Naive thymus-derived CD4-positive, alpha-beta T cell (primary cell): ENCODE measurements at regions of chr16 and their contacts with region 1.

Region 1: GRCh38 chr16:69396187-69397061 is 10.6 kb upstream of the TERF2 start:
- DNase-seq: peak; percentile 23 to 73 (median 66)
- ATAC-seq: peak; percentile 86
- H3K4me3 ChIP-seq: no peak overlapping the region
- H3K4me3 Mint-ChIP-seq: peak overlapping the region in 3 of 10 donors; percentile 26 to 57 (median 50)
- H3K27ac ChIP-seq: peak overlapping the region; percentile 22
- H3K27ac Mint-ChIP-seq: peak overlapping the region; percentile 8 to 76 (median 41)
- H3K4me1 ChIP-seq: peaks cover 0 to 3% of the 10 kb centered on the region in 2 donors
- H3K4me1 Mint-ChIP-seq: peaks cover 0 to 17% (median 5%) of the 10 kb centered on the region in 7 donors
- H3K27me3 ChIP-seq: no peaks in the 10 kb centered on the region
- H3K27me3 Mint-ChIP-seq: peaks cover 0 to 11% (median 0%) of the 10 kb centered on the region in 5 donors

Region 2: GRCh38 chr16:69371564-69371963 is 24.9 kb before region 1 on chr16:
- CTCF ChIA-PET with region 1: no interaction called
- POLR2A ChIA-PET with region 1: no interaction called
- intact Hi-C with region 1: no loop called
- DNase-seq: no peak
- ATAC-seq: no peak
- H3K4me3 ChIP-seq: no peak overlapping the region
- H3K4me3 Mint-ChIP-seq: peak overlapping the region in 1 of 10 donors; percentile 59
- H3K27ac ChIP-seq: no peak overlapping the region
- H3K27ac Mint-ChIP-seq: peak overlapping the region in 2 of 9 donors; percentile 16 to 58
- H3K4me1 ChIP-seq: no peaks in the 10 kb centered on the region
- H3K4me1 Mint-ChIP-seq: peaks cover 3 to 23% (median 15%) of the 10 kb centered on the region in 7 donors
- H3K27me3 ChIP-seq: no peaks in the 10 kb centered on the region
- H3K27me3 Mint-ChIP-seq: no peaks in the 10 kb centered on the region

Region 3: GRCh38 chr16:69443927-69444631 is 47.7 kb after region 1 on chr16:
- CTCF ChIA-PET with region 1: interaction called, 4 read pairs
- POLR2A ChIA-PET with region 1: interaction called, 3 read pairs
- intact Hi-C with region 1: loop called in 1 of 2 experiments (anchors 5 kb)
- DNase-seq: peak in 7 of 9 donors; percentile 1 to 51 (median 35)
- ATAC-seq: peak; percentile 85
- H3K4me3 ChIP-seq: peak overlapping the region; percentile 45
- H3K4me3 Mint-ChIP-seq: peak overlapping the region; percentile 68 to 90 (median 86)
- H3K27ac ChIP-seq: peak overlapping the region; percentile 64
- H3K27ac Mint-ChIP-seq: peak overlapping the region; percentile 86 to 98 (median 96)
- H3K4me1 ChIP-seq: peaks cover 10 to 26% of the 10 kb centered on the region in 2 donors
- H3K4me1 Mint-ChIP-seq: peaks cover 16 to 51% (median 41%) of the 10 kb centered on the region in 7 donors
- H3K27me3 ChIP-seq: no peaks in the 10 kb centered on the region
- H3K27me3 Mint-ChIP-seq: no peaks in the 10 kb centered on the region

Region 4: DNA sequence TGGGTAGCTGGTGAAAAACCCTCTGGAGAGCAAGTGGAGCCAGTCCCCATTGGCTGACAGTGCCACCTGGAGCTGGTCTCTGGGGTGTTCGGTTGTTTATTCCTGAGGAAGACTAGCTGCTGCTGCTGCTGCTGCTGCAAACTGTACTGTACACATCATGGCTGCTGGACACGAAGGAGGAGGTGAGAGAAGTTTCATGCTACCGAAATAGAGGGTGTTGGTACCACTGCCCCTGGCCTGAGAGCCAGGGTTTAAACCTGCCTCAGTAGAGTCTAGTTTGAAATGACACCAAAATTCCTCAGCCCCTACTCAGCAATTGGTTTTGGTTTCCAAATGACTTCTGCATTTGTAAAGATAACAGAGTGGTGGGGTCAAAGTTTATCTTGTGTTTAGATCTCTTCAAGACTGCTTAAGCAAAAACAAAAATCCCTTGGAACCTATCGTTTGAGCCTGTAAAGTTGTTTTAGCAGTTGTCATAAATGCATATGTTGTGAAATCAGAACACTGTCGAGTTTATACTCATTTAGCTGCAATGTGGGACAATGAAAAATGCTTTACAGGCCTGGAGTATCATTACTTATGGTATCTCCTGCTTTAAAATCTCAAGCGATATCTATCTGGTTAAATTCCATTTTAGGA is 68.8 kb after region 1 on chr16:
- CTCF ChIA-PET with region 1: interaction called, 5 read pairs
- POLR2A ChIA-PET with region 1: interaction called, 3 read pairs
- intact Hi-C with region 1: loop called (anchors 1 to 5 kb)
- DNase-seq: peak in 1 of 9 donors; percentile 8
- ATAC-seq: peak; percentile 46
- H3K4me3 ChIP-seq: no peak overlapping the region
- H3K4me3 Mint-ChIP-seq: peak overlapping the region in 1 of 10 donors; percentile 77
- H3K27ac ChIP-seq: no peak overlapping the region
- H3K27ac Mint-ChIP-seq: peak overlapping the region; percentile 43 to 90 (median 59)
- H3K4me1 ChIP-seq: peaks cover 0 to 3% of the 10 kb centered on the region in 2 donors
- H3K4me1 Mint-ChIP-seq: peaks cover 5 to 58% (median 28%) of the 10 kb centered on the region in 7 donors
- H3K27me3 ChIP-seq: no peaks in the 10 kb centered on the region
- H3K27me3 Mint-ChIP-seq: no peaks in the 10 kb centered on the region

Region 5: DNA sequence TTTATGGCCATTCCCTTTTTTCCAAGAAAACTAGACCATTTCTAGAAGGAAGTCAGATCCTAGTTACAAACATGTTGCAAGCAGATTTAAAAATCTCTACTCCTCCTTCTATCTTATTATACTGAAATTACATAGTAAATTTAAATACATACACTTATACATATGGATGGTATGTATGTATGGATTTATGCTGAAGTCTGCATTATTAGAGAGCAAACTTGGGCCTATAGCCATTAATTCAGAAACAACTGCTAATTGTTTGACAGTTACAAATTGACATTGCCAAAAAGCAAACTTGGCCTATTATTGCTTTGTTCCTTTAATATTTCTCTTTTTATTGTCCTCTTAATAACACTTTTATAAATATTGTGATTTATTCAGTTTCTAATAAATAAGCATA is 236.4 kb after region 1 on chr16:
- CTCF ChIA-PET with region 1: no interaction called
- POLR2A ChIA-PET with region 1: no interaction called
- intact Hi-C with region 1: loop called in 1 of 2 experiments (anchors 5 kb)
- DNase-seq: no peak
- ATAC-seq: no peak
- H3K4me3 ChIP-seq: no peak overlapping the region
- H3K4me3 Mint-ChIP-seq: no peak overlapping the region
- H3K27ac ChIP-seq: no peak overlapping the region
- H3K27ac Mint-ChIP-seq: no peak overlapping the region
- H3K4me1 ChIP-seq: no peaks in the 10 kb centered on the region
- H3K4me1 Mint-ChIP-seq: peaks cover 0 to 2% (median 0%) of the 10 kb centered on the region in 7 donors
- H3K27me3 ChIP-seq: no peaks in the 10 kb centered on the region
- H3K27me3 Mint-ChIP-seq: no peaks in the 10 kb centered on the region

Region 6: DNA sequence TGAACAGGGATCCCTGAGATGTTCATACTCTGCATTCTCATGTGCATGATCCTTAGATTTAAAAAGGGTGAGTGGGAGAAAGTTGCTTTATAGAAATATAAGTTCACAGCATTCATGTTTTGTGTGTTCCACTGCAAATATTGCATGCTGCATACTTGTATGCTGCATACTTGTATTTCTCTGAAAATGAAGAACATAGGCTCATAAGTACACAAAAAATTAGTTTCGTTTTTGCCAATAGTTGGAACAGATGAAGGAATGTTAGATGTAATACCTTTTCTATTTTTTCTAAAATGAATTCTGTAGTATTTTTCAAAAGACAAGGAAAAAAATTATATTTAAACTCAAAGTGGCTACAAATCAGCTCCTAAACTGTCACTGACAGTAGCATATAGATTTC is 248.4 kb after region 1 on chr16:
- CTCF ChIA-PET with region 1: interaction called, 3 read pairs
- POLR2A ChIA-PET with region 1: no interaction called
- intact Hi-C with region 1: loop called in 1 of 2 experiments (anchors 5 kb)
- DNase-seq: no peak
- ATAC-seq: no peak
- H3K4me3 ChIP-seq: no peak overlapping the region
- H3K4me3 Mint-ChIP-seq: no peak overlapping the region
- H3K27ac ChIP-seq: no peak overlapping the region
- H3K27ac Mint-ChIP-seq: peak overlapping the region in 2 of 9 donors; percentile 41 to 69
- H3K4me1 ChIP-seq: no peaks in the 10 kb centered on the region
- H3K4me1 Mint-ChIP-seq: peaks cover 0 to 5% (median 4%) of the 10 kb centered on the region in 7 donors
- H3K27me3 ChIP-seq: no peaks in the 10 kb centered on the region
- H3K27me3 Mint-ChIP-seq: no peaks in the 10 kb centered on the region

Region 7: GRCh38 chr16:69709456-69710084 is 313.1 kb after region 1 on chr16:
- CTCF ChIA-PET with region 1: interaction called, 3 read pairs
- POLR2A ChIA-PET with region 1: no interaction called
- intact Hi-C with region 1: loop called in 1 of 2 experiments (anchors 5 kb)
- DNase-seq: peak in 7 of 9 donors; percentile 35 to 67 (median 59)
- ATAC-seq: peak; percentile 78
- H3K4me3 ChIP-seq: no peak overlapping the region
- H3K4me3 Mint-ChIP-seq: no peak overlapping the region
- H3K27ac ChIP-seq: no peak overlapping the region
- H3K27ac Mint-ChIP-seq: peak overlapping the region in 6 of 9 donors; percentile 16 to 61 (median 56)
- H3K4me1 ChIP-seq: no peaks in the 10 kb centered on the region
- H3K4me1 Mint-ChIP-seq: peaks cover 0 to 6% (median 0%) of the 10 kb centered on the region in 7 donors
- H3K27me3 ChIP-seq: no peaks in the 10 kb centered on the region
- H3K27me3 Mint-ChIP-seq: no peaks in the 10 kb centered on the region